Gastrocnemius medialis (tissue), 4 donors: ENCODE measurements at regions of chr11 and their contacts with region 1.

Region 1: DNA sequence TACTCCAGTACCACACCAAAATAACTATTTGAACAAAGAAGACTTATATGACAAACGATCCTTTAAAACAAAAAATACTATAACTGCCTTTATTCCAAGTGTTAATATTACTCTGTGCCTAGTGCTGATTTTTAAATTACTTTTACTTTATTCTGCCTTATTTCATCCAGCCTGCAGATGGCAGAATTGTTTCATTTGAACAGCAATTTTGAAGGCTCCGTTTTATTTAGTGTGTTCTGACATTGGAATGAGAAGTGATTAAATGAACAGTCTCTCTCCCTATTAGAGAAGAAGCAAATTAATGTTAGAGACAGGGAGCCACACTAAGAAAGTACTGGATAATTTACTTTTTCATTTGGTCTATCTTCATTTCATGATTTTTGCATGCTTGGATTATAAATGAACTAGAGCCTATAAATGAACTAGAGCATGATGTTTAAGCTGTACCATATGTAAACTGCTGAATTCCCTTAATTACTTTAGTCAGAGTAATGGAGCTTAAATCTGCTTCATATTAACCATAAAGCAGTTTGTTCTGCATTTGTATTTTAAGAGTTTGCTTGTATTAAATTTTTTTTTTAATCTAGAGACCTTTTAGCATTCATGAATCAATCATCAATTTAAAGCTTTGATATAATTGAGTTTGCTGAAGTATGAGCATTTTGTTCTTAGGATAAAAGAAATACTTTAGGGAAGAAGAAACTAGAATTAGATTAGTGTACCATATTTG is 9.8 kb downstream of the PDHX start:
- DNase-seq: no peak
- ATAC-seq: peak; percentile 58 to 70
- H3K4me3 ChIP-seq: no peak overlapping the region
- H3K27ac ChIP-seq: no peak overlapping the region
- H3K4me1 ChIP-seq: peaks cover 65 to 70% of the 10 kb centered on the region in 2 donors
- H3K27me3 ChIP-seq: no peaks in the 10 kb centered on the region
- CTCF ChIP-seq: peak; percentile 59 to 80 (median 70)
- POLR2A ChIP-seq: no peak

Region 2: DNA sequence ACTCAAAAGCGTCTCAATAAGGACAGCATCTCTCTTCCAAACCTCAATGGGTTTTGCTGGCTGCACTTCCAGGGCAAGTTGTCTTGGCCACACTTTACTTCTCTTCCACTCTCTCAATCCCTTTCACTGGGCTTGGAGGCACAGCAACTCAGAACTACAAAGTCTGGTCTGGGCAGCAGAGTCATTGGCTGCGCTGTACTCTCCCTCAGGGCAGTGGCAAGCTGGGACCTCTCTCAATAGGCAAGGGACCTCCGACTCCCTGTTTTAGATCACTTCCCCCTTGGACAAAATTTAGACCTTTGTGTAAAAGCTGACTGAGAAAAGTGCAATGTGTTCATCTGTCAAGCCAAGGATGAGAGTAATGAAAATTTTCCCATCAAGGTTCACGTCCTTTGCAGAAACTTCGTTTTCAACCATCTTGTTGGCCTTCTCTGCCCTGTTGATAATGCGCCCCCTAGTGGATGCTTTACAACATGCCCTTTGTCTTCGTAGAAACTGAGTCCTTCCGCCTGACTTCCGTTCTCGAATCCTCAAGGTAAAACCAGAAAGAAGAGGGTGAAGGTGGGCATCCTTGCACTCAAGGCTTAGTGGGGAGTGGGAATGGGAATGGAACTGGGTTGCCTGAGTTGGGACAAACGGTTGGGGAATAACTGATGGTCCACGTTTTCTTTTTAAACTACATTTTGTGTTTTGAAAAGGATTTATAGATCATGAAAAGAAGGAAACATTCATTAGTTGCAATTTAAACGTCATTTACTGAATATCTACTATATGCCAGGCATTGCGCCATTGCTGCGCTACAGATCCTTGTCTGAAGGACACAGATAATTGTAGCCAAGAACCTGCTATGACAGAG is 311.8 kb after region 1 on chr11:
- in situ Hi-C with region 1: loop called (anchors 5 to 10 kb)
- intact Hi-C with region 1: loop called (anchors 1 kb)
- DNase-seq: peak; percentile 16 to 33
- ATAC-seq: peak in 1 of 2 donors; percentile 58
- H3K4me3 ChIP-seq: no peak overlapping the region
- H3K27ac ChIP-seq: no peak overlapping the region
- H3K4me1 ChIP-seq: peaks cover 0 to 3% of the 10 kb centered on the region in 2 donors
- H3K27me3 ChIP-seq: no peaks in the 10 kb centered on the region
- CTCF ChIP-seq: peak; percentile 61 to 84 (median 77)
- POLR2A ChIP-seq: no peak

Region 3: GRCh38 chr11:35246745-35247144 is 320.5 kb after region 1 on chr11:
- in situ Hi-C with region 1: loop called in 1 of 4 experiments (anchors 5 kb)
- intact Hi-C with region 1: no loop called
- DNase-seq: no peak
- ATAC-seq: peak; percentile 42 to 51
- H3K4me3 ChIP-seq: no peak overlapping the region
- H3K27ac ChIP-seq: peak overlapping the region; percentile 11 to 59 (median 48)
- H3K4me1 ChIP-seq: peaks cover 4 to 9% of the 10 kb centered on the region in 2 donors
- H3K27me3 ChIP-seq: no peaks in the 10 kb centered on the region
- CTCF ChIP-seq: no peak
- POLR2A ChIP-seq: no peak

Region 4: GRCh38 chr11:35391922-35392813 is 465.9 kb after region 1 on chr11:
- in situ Hi-C with region 1: loop called (anchors 5 to 10 kb)
- intact Hi-C with region 1: loop called (anchors 1 kb)
- DNase-seq: peak; percentile 26 to 52
- ATAC-seq: peak; percentile 61 to 65
- H3K4me3 ChIP-seq: peak overlapping the region in 1 of 4 donors; percentile 29
- H3K27ac ChIP-seq: no peak overlapping the region
- H3K4me1 ChIP-seq: peaks cover 3 to 4% of the 10 kb centered on the region in 2 donors
- H3K27me3 ChIP-seq: no peaks in the 10 kb centered on the region
- CTCF ChIP-seq: peak; percentile 80 to 88 (median 83)
- POLR2A ChIP-seq: no peak

Region 5: DNA sequence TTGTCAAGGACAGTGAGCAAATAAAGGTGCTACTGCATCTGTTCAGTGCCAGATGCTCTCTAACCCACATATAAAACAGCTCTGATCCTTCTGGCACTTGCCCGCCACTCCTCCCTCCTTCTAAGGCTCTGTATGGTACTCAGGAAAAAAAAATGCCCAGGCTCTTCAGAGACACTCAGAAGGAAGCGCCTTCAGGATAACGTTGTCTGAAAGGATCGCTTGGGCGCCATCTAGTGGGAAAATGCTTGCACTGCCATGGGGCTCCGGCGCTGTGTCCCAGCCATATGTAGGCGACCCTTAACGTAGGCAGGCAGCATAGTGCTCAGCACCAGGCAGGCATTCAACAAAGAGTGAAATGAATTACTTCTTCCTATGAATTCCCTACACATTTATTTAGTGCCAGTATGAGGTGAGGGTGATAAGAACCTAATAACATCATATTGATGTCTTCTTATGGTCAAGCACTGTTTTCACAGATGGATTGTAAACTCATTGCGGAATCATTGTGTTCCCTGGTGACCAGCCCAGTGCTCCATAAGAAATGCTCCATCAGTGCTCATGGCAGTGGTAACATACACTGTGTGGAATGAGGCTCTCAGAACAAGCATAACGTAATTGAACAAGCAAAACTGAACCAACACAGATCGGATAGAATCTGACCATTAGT is 559.5 kb after region 1 on chr11:
- in situ Hi-C with region 1: no loop called
- intact Hi-C with region 1: loop called (anchors 10 kb)
- DNase-seq: peak in 1 of 2 donors; percentile 48
- ATAC-seq: peak; percentile 76 to 89
- H3K4me3 ChIP-seq: no peak overlapping the region
- H3K27ac ChIP-seq: no peak overlapping the region
- H3K4me1 ChIP-seq: no peaks in the 10 kb centered on the region
- H3K27me3 ChIP-seq: no peaks in the 10 kb centered on the region
- CTCF ChIP-seq: peak; percentile 41 to 86 (median 63)
- POLR2A ChIP-seq: no peak